RWPE1 (cell line): ENCODE measurements at regions of chr14 and their contacts with region 1.

Region 1: GRCh38 chr14:88559852-88560251 is 3.0 kb upstream of the ZC3H14 start:
- DNase-seq: no peak
- H3K27ac ChIP-seq: no peak overlapping the region
- CTCF ChIP-seq: no peak; the same call in 1 of the 2 replicates

Region 2: DNA sequence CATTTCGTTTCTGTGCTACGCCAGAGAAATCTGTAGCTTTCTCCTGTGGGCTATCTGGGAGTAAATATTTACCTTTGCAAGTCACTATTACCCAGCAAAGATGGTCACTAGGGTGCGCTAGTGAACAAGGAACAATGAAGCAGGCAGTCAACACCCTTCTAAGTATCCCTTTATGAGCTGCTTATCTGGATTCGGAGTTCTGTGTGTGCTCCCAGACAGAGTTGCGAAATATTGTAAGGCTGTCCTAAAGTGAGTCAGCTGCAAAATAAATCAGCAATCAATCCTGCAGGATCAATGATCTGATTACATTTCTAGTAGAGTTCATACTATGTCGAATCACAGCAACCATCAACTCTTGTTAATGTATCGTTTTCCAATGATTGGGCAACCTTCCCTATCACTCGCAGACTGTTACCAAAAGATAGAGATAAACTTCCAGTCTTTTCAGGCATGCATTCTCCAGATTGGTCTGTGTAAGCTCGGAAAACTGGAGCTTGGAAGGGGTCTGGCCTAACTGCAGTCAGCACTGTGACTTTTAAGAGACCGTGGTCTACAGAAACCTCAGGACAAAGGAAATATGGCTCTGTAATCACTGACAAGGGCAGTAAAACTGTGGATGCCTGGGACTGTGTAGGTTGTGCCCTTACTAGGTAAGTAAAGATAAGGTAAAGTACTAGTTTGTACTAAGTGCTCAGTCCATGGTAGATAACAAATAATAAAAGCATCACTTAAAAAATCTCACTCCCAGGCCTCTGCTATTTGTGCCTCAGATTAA is 370.2 kb before region 1 on chr14:
- CTCF ChIA-PET with region 1: interaction called, 13 read pairs
- POLR2A ChIA-PET with region 1: no interaction called
- DNase-seq: peak; percentile 63
- H3K27ac ChIP-seq: no peak overlapping the region
- CTCF ChIP-seq: peak; percentile 56

Region 3: GRCh38 chr14:88492272-88493089 is 67.4 kb before region 1 on chr14:
- CTCF ChIA-PET with region 1: interaction called, 11 read pairs
- POLR2A ChIA-PET with region 1: no interaction called
- DNase-seq: peak; percentile 74
- H3K27ac ChIP-seq: no peak overlapping the region
- CTCF ChIP-seq: peak; percentile 80